ENCODE measurements at regions of chr3 and their contacts with region 1.

Region 1: GRCh38 chr3:37779289-37780152 is 82.2 kb upstream of the CTDSPL start:
- DNase-seq: peak; percentile 66
- ATAC-seq: peak; percentile 92
- H3K4me3 ChIP-seq: no peak overlapping the region
- H3K27ac ChIP-seq: no peak overlapping the region
- H3K4me1 ChIP-seq: no peaks in the 10 kb centered on the region
- H3K27me3 ChIP-seq: peaks cover 2 to 6% of the 10 kb centered on the region in 2 experiments; a peak in 2 of 5 replicates
- CTCF ChIP-seq: peak; percentile 84
- EP300 ChIP-seq: no peak
- POLR2A ChIP-seq: no peak
- RAD21 ChIP-seq: peak; percentile 49; the same call in 1 of the 2 replicates

Region 2: GRCh38 chr3:37556789-37557301 is 222.7 kb before region 1 on chr3:
- CTCF ChIA-PET with region 1: interaction called, 7 read pairs
- POLR2A ChIA-PET with region 1: no interaction called
- in situ Hi-C with region 1: no loop called
- intact Hi-C with region 1: loop called (anchors 1 kb)
- DNase-seq: no peak
- ATAC-seq: no peak
- H3K4me3 ChIP-seq: no peak overlapping the region
- H3K27ac ChIP-seq: no peak overlapping the region
- H3K4me1 ChIP-seq: no peaks in the 10 kb centered on the region
- H3K27me3 ChIP-seq: peaks cover 0 to 3% of the 10 kb centered on the region in 2 experiments; a peak in 2 of 5 replicates
- CTCF ChIP-seq: no peak
- EP300 ChIP-seq: no peak
- POLR2A ChIP-seq: no peak
- RAD21 ChIP-seq: no peak

Region 3: DNA sequence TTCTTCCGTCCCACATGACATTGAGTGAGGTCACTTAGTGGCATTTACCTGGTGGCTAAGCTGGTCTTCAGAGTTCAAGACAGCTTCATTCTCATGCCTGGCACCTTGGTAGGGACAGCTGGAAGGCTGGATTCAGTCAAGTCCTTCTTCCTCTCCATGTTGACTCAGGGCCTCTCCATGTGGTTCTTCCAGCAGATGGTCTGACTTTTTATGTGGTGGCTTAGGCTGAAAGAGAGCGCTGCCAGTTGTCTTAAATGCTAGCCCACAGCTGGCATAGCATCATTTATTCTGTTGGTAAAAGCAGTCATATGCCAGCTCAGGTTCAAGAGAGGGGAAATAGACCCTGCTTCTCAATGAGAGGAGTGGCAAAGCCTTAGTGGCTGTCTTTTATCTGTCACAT is 29.1 kb after region 1 on chr3:
- CTCF ChIA-PET with region 1: no interaction called
- POLR2A ChIA-PET with region 1: no interaction called
- in situ Hi-C with region 1: no loop called
- intact Hi-C with region 1: loop called (anchors 2 kb)
- DNase-seq: no peak
- ATAC-seq: no peak
- H3K4me3 ChIP-seq: no peak overlapping the region
- H3K27ac ChIP-seq: no peak overlapping the region
- H3K4me1 ChIP-seq: no peaks in the 10 kb centered on the region
- H3K27me3 ChIP-seq: no peaks in the 10 kb centered on the region
- CTCF ChIP-seq: no peak
- EP300 ChIP-seq: no peak
- POLR2A ChIP-seq: no peak
- RAD21 ChIP-seq: no peak

Measured in HepG2 (cell line).